MCF 10A (cell line): ENCODE measurements at regions of chr5 and their contacts with region 1.

Region 1: DNA sequence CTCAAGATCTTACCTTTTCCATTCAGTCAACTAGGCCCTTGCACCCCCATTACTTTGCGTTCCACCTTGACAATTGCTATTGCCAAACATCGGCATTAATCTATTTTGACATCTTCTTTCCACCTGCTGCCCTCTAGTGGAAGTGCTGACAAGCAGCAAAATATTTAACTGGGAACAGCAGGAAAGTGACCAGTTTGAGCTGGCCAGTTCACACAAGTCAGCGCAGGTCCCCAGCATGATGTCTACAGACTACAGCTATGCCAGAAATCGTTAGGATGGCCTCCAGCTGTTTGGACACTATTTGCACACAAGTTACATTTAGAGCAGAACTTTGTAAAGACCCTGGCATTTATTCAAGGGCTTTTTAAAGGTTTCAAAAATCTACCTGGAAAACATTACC is 160.1 kb downstream of the GHR start:
- DNase-seq: peak; percentile 88
- H3K4me3 Mint-ChIP-seq: no peak overlapping the region
- H3K27ac Mint-ChIP-seq: no peak overlapping the region
- H3K4me1 Mint-ChIP-seq: peaks cover 26% of the 10 kb centered on the region
- H3K27me3 Mint-ChIP-seq: no peaks in the 10 kb centered on the region
- CTCF ChIP-seq: peak; percentile 72

Region 2: GRCh38 chr5:41856644-41857491 is 726.5 kb before region 1 on chr5:
- CTCF ChIA-PET with region 1: interaction called, 6 read pairs
- POLR2A ChIA-PET with region 1: no interaction called
- intact Hi-C with region 1: loop called (anchors 1 kb)
- DNase-seq: peak; percentile 81
- H3K4me3 Mint-ChIP-seq: no peak overlapping the region
- H3K27ac Mint-ChIP-seq: no peak overlapping the region
- H3K4me1 Mint-ChIP-seq: no peaks in the 10 kb centered on the region
- H3K27me3 Mint-ChIP-seq: no peaks in the 10 kb centered on the region
- CTCF ChIP-seq: peak; percentile 73

Region 3: GRCh38 chr5:42057254-42057690 is 526.0 kb before region 1 on chr5:
- CTCF ChIA-PET with region 1: interaction called, 9 read pairs
- POLR2A ChIA-PET with region 1: no interaction called
- intact Hi-C with region 1: loop called (anchors 5 kb)
- DNase-seq: peak; percentile 67
- H3K4me3 Mint-ChIP-seq: no peak overlapping the region
- H3K27ac Mint-ChIP-seq: no peak overlapping the region
- H3K4me1 Mint-ChIP-seq: no peaks in the 10 kb centered on the region
- H3K27me3 Mint-ChIP-seq: no peaks in the 10 kb centered on the region
- CTCF ChIP-seq: peak; percentile 76

Region 4: GRCh38 chr5:42337143-42337542 is 246.2 kb before region 1 on chr5:
- CTCF ChIA-PET with region 1: no interaction called
- POLR2A ChIA-PET with region 1: no interaction called
- intact Hi-C with region 1: no loop called
- DNase-seq: no peak
- H3K4me3 Mint-ChIP-seq: no peak overlapping the region
- H3K27ac Mint-ChIP-seq: no peak overlapping the region
- H3K4me1 Mint-ChIP-seq: no peaks in the 10 kb centered on the region
- H3K27me3 Mint-ChIP-seq: no peaks in the 10 kb centered on the region
- CTCF ChIP-seq: no peak

Region 5: GRCh38 chr5:42514754-42515153 is 68.6 kb before region 1 on chr5:
- CTCF ChIA-PET with region 1: interaction called, 112 read pairs
- POLR2A ChIA-PET with region 1: interaction called, 18 read pairs
- intact Hi-C with region 1: loop called (anchors 1 kb)
- DNase-seq: peak; percentile 29
- H3K4me3 Mint-ChIP-seq: no peak overlapping the region
- H3K27ac Mint-ChIP-seq: no peak overlapping the region
- H3K4me1 Mint-ChIP-seq: peaks cover 5% of the 10 kb centered on the region
- H3K27me3 Mint-ChIP-seq: no peaks in the 10 kb centered on the region
- CTCF ChIP-seq: peak; percentile 11

Region 6: DNA sequence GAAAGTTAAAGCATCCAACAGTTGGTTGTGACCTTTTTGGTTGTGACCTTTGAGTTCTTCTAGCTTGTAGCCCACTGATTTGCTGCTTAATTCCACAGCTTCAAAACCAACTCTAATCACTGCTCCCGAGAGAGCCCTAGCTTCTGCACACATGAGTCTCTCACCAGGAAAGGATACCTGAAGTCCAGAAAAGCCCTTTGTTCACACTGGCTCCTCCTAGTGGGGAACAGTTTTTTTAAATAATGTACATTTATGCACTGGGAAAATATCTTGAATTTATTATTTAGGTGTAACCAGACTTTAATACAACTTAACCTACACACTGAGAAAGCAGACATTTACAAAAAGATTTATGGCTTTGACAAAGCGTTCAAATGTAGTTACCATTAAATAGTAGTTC is 53.1 kb after region 1 on chr5:
- CTCF ChIA-PET with region 1: interaction called, 10 read pairs
- POLR2A ChIA-PET with region 1: interaction called, 4 read pairs
- intact Hi-C with region 1: no loop called
- DNase-seq: peak; percentile 51
- H3K4me3 Mint-ChIP-seq: no peak overlapping the region
- H3K27ac Mint-ChIP-seq: no peak overlapping the region
- H3K4me1 Mint-ChIP-seq: peaks cover 13% of the 10 kb centered on the region
- H3K27me3 Mint-ChIP-seq: no peaks in the 10 kb centered on the region
- CTCF ChIP-seq: peak; percentile 29

Region 7: DNA sequence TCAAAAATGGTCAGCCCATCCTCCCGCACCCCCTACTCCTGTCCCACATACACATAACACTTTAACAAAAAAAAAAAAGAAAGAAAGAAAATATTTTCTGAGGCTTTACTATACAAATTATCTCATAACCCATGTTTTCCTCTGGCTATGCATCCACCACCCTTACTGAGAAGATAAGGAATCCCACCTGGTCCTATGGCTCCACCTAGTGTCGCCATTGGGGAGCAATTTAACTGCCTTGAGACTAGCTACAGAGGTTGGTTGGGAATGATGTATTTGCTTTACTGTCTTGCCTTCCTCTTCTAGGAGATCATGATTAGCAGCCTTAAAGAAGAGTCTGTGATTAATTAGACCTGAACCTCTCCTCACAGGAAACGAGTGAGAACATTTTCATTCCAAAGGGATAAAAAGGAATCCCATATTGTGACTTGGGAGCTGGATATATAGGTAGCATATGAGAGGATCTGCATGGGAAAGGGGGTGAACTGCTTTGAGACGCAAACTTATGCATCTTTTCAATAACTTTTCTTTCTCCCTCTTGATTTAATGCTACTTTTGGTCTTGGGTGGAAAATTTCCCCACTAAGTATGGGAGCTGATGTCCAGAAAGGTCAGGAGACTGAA is 306.1 kb after region 1 on chr5:
- CTCF ChIA-PET with region 1: interaction called, 13 read pairs
- POLR2A ChIA-PET with region 1: no interaction called
- intact Hi-C with region 1: loop called (anchors 1 kb)
- DNase-seq: peak; percentile 88
- H3K4me3 Mint-ChIP-seq: no peak overlapping the region
- H3K27ac Mint-ChIP-seq: no peak overlapping the region
- H3K4me1 Mint-ChIP-seq: no peaks in the 10 kb centered on the region
- H3K27me3 Mint-ChIP-seq: no peaks in the 10 kb centered on the region
- CTCF ChIP-seq: peak; percentile 85

Region 8: DNA sequence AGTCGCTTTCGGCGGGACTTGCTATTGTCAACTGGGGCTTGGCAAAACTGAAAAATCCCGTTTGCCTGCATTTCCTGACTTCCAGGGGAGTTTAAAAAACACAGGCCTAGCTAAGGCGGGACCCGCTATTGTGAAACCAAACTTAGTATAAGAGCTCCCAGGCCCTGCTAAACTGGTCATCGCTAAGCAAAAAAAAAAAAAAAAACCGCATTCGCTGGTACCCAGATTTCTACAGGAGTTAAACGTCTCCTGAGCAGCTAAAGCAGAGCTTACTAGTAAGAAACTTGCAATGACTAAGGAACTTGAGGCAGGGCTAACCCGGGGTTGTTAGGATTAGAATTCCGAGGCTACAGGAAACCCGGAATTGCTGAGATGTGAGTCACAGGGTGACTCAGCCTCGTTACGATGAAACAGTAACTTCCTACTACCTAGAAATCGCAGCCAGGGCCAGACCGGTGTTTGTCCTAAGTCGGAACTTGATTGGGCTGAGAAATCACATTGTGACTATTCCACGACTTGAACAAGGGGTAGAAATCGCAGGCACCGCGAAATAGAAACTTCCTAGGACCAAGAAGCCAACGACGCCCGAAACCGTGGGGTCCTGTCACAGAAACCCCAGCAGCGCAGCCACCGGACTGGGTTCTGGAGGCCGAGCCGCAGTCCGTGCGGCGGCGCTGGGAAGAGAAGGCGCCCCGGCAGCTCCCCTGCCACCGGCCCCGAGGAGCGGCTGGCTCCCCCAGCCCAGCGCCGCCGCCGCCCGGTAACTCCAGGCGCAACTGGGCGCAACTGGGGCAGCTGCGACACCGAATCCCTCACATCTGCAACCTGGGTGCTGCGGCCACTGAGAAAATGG is 367.3 kb after region 1 on chr5:
- CTCF ChIA-PET with region 1: no interaction called
- POLR2A ChIA-PET with region 1: no interaction called
- intact Hi-C with region 1: no loop called
- DNase-seq: peak; percentile 98
- H3K4me3 Mint-ChIP-seq: peak overlapping the region; percentile 47
- H3K27ac Mint-ChIP-seq: peak overlapping the region; percentile 85
- H3K4me1 Mint-ChIP-seq: no peaks in the 10 kb centered on the region
- H3K27me3 Mint-ChIP-seq: no peaks in the 10 kb centered on the region
- CTCF ChIP-seq: no peak